ENCODE measurements at regions of chr2 and their contacts with region 1.

Region 1: DNA sequence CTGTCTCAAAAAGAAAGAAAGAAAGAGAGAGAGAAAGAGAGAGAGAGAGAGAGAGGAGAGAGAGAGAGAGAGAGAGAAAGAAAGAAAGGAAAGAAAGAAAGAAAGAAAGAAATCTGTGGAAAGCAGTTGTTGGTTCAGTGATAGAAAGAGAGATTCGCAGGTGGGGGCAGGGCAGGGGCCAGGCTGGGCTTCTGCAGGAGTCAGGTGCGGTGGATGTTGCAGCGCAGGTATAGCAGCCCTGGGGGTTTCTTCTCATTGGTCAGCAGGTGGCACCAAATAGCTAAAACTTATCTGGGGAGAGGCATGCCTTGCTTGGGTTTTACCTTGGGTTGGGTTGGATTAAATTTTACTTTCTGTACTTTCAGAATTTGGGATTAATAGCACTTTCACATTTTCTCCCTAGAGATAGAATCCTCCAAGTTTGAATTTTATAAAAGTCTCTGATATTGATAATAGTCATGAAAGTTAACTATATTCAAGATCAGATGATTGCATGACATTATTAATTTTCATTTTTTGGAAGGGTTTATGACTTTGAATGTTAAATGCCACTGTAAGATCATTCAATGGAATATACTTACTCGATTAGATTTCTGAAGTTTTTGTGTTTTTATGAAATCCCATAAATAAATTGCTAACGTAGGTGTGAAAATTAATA is 66.6 kb downstream of the SPTBN1 start:
- DNase-seq: peak; percentile 64 to 79
- ATAC-seq: peak; percentile 91 to 93
- H3K4me3 ChIP-seq: no peak overlapping the region
- H3K27ac ChIP-seq: peak overlapping the region; percentile 41 to 74; a peak in 5 of 6 replicates
- H3K4me1 ChIP-seq: peaks cover 45% of the 10 kb centered on the region
- CTCF ChIP-seq: peak; percentile 85
- EP300 ChIP-seq: no peak
- POLR2A ChIP-seq: no peak
- RAD21 ChIP-seq: peak; percentile 95 to 96

Region 2: DNA sequence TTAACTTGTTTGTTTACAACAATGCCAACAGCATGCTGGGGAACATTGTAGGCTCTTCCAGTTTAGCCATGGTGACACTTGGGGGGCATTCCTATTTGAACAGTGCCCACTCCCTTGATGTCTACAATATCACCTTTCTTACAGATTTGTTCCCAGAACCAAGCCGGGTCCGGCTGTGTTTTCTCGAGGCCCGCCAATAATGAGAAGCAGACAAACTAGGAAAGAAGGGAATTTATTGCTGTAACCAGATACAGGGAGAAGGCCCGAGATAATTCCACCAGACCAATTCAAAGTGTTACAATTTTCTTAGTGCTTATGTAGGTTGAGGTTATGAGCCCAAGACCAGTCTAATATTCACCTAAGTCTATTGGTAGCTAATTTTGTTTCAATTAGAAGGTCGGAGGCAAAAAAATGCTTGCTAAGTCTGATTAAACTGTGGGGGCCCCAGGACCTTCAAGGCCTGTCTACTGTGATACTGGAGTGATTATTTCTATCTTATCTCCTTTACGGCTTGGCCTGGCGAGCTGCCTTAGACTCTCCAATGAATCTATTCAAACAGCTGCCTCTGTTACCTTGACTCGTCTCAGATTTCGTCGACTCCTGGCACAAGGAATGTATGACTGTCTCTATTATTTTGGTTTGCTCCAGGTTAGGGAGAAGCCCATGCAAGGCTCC is 492.9 kb before region 1 on chr2:
- CTCF ChIA-PET with region 1: no interaction called
- POLR2A ChIA-PET with region 1: no interaction called
- DNase-seq: no peak
- ATAC-seq: no peak
- H3K4me3 ChIP-seq: no peak overlapping the region
- H3K27ac ChIP-seq: no peak overlapping the region
- H3K4me1 ChIP-seq: no peaks in the 10 kb centered on the region
- CTCF ChIP-seq: no peak
- EP300 ChIP-seq: no peak
- POLR2A ChIP-seq: no peak
- RAD21 ChIP-seq: no peak

Region 3: GRCh38 chr2:54497763-54498680 is 24.7 kb before region 1 on chr2:
- CTCF ChIA-PET with region 1: interaction called, 12 read pairs
- POLR2A ChIA-PET with region 1: no interaction called
- DNase-seq: peak in 1 of 2 experiments; percentile 56
- ATAC-seq: peak; percentile 82 to 83
- H3K4me3 ChIP-seq: no peak overlapping the region
- H3K27ac ChIP-seq: no peak overlapping the region
- H3K4me1 ChIP-seq: peaks cover 11% of the 10 kb centered on the region; the same call in 2 of the 3 replicates
- CTCF ChIP-seq: peak; percentile 30
- EP300 ChIP-seq: no peak
- POLR2A ChIP-seq: no peak
- RAD21 ChIP-seq: peak in 1 of 2 experiments; percentile 19; a peak in 2 of 5 replicates

Region 4: DNA sequence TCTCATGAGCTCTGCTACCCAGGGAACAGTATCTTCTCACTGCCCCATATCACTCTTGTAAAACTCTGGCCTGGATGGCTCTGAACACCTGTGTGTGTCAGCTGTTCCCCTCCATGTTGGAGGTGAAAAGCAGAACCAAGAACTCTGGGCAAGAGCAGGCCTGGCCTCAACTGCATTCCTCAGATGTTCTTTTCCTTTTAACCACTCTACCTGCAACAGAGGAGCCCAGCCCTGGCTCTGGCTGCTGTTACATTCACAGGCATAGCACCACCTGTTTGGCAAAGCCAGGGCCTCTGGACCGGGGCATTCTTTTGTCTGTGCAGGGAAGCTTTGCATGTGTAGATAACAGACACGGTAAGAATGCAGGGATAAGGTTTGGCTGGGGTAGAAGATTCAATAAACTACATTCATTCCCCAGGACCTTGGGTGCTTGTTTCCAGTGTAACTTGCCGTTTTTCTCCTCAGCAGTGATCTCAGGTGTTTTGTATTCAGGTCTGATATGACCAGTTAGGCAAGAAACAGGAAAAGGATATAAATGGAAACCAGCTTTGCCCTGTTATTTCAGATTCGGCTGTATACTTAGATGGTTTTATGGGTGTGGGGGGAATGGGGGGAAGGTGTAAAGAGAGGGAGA is 28.5 kb after region 1 on chr2:
- CTCF ChIA-PET with region 1: interaction called, 91 read pairs
- POLR2A ChIA-PET with region 1: no interaction called
- DNase-seq: no peak
- ATAC-seq: no peak
- H3K4me3 ChIP-seq: no peak overlapping the region
- H3K27ac ChIP-seq: peak overlapping the region; percentile 22 to 52; a peak in 4 of 6 replicates
- H3K4me1 ChIP-seq: peaks cover 53% of the 10 kb centered on the region
- CTCF ChIP-seq: no peak
- EP300 ChIP-seq: no peak
- POLR2A ChIP-seq: no peak
- RAD21 ChIP-seq: no peak

Region 5: GRCh38 chr2:54570925-54571694 is 48.4 kb after region 1 on chr2:
- CTCF ChIA-PET with region 1: interaction called, 91 read pairs
- POLR2A ChIA-PET with region 1: no interaction called
- DNase-seq: peak; percentile 71 to 88
- ATAC-seq: peak; percentile 69 to 75
- H3K4me3 ChIP-seq: peak overlapping the region; percentile 20; the same call in 2 of the 3 replicates
- H3K27ac ChIP-seq: peak overlapping the region; percentile 93 to 97
- H3K4me1 ChIP-seq: peaks cover 93% of the 10 kb centered on the region
- CTCF ChIP-seq: no peak
- EP300 ChIP-seq: peak in 1 of 2 experiments; percentile 36; a peak in 2 of 5 replicates
- POLR2A ChIP-seq: no peak
- RAD21 ChIP-seq: peak; percentile 6 to 37; a peak in 1 of 5 replicates

Region 6: GRCh38 chr2:54606393-54606969 is 83.7 kb after region 1 on chr2:
- CTCF ChIA-PET with region 1: interaction called, 10 read pairs
- POLR2A ChIA-PET with region 1: no interaction called
- DNase-seq: no peak
- ATAC-seq: no peak
- H3K4me3 ChIP-seq: no peak overlapping the region
- H3K27ac ChIP-seq: peak overlapping the region in 1 of 2 experiments; percentile 52; a peak in 1 of 6 replicates
- H3K4me1 ChIP-seq: peaks cover 90% of the 10 kb centered on the region
- CTCF ChIP-seq: no peak
- EP300 ChIP-seq: no peak
- POLR2A ChIP-seq: no peak
- RAD21 ChIP-seq: no peak

Region 7: GRCh38 chr2:54634564-54635511 is 112.1 kb after region 1 on chr2:
- CTCF ChIA-PET with region 1: interaction called, 12 read pairs
- POLR2A ChIA-PET with region 1: no interaction called
- DNase-seq: peak; percentile 83 to 89
- ATAC-seq: peak; percentile 48 to 71
- H3K4me3 ChIP-seq: peak overlapping the region; percentile 1; the same call in 1 of the 3 replicates
- H3K27ac ChIP-seq: peak overlapping the region; percentile 82 to 87
- H3K4me1 ChIP-seq: peaks cover 89% of the 10 kb centered on the region
- CTCF ChIP-seq: no peak
- EP300 ChIP-seq: peak in 1 of 2 experiments; percentile 57; a peak in 2 of 5 replicates
- POLR2A ChIP-seq: no peak
- RAD21 ChIP-seq: no peak

Region 8: GRCh38 chr2:54691445-54692135 is 168.8 kb after region 1 on chr2:
- CTCF ChIA-PET with region 1: interaction called, 13 read pairs
- POLR2A ChIA-PET with region 1: interaction called, 3 read pairs
- DNase-seq: no peak
- ATAC-seq: peak in 1 of 2 experiments; percentile 25; a peak in 1 of 6 replicates
- H3K4me3 ChIP-seq: no peak overlapping the region
- H3K27ac ChIP-seq: no peak overlapping the region
- H3K4me1 ChIP-seq: no peaks in the 10 kb centered on the region
- CTCF ChIP-seq: no peak
- EP300 ChIP-seq: no peak
- POLR2A ChIP-seq: no peak
- RAD21 ChIP-seq: no peak

Region 9: DNA sequence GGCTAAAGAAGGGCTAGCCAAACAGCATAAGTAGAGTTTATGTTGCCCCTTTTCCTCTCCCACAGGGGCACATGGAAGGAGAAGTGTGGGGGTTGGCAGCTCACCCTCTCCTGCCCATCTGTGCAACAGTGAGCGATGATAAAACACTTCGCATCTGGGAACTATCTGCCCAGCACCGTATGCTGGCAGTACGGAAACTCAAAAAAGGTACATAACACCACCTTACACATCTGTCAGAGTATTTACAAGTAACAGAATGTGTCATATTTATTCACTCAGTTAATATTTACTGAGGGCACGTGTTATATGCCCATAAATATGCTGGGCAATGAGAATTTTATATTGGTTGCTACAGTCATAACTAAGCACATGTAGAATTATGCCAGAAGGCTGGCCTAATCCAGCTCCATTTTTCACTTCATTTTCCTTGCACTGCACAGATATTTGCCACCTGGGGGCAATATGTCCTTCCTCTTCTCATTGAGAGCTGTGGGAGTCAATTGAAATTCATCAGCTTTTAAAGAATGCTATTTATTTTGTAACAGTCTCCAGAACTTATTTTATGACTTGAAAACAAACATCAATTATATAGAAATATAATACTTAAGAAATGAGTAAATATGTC is 376.9 kb after region 1 on chr2:
- CTCF ChIA-PET with region 1: no interaction called
- POLR2A ChIA-PET with region 1: no interaction called
- DNase-seq: peak; percentile 35 to 58
- ATAC-seq: peak in 1 of 2 experiments; percentile 55; a peak in 3 of 6 replicates
- H3K4me3 ChIP-seq: no peak overlapping the region
- H3K27ac ChIP-seq: no peak overlapping the region
- H3K4me1 ChIP-seq: peaks cover 17% of the 10 kb centered on the region
- CTCF ChIP-seq: peak; percentile 75
- EP300 ChIP-seq: no peak
- POLR2A ChIP-seq: no peak
- RAD21 ChIP-seq: peak; percentile 90 to 93